ENCODE measurements at regions of chr14 and their contacts with region 1.

Region 1: GRCh38 chr14:93970549-93970946 is 5.8 kb downstream of the ASB2 start:
- DNase-seq: peak; percentile 42
- ATAC-seq: peak; percentile 51
- H3K4me3 Mint-ChIP-seq: peak overlapping the region; percentile 89
- H3K27ac Mint-ChIP-seq: peak overlapping the region; percentile 89
- H3K4me1 Mint-ChIP-seq: peaks cover 70% of the 10 kb centered on the region
- H3K27me3 Mint-ChIP-seq: peaks cover 8% of the 10 kb centered on the region
- CTCF ChIP-seq: no peak

Region 2: DNA sequence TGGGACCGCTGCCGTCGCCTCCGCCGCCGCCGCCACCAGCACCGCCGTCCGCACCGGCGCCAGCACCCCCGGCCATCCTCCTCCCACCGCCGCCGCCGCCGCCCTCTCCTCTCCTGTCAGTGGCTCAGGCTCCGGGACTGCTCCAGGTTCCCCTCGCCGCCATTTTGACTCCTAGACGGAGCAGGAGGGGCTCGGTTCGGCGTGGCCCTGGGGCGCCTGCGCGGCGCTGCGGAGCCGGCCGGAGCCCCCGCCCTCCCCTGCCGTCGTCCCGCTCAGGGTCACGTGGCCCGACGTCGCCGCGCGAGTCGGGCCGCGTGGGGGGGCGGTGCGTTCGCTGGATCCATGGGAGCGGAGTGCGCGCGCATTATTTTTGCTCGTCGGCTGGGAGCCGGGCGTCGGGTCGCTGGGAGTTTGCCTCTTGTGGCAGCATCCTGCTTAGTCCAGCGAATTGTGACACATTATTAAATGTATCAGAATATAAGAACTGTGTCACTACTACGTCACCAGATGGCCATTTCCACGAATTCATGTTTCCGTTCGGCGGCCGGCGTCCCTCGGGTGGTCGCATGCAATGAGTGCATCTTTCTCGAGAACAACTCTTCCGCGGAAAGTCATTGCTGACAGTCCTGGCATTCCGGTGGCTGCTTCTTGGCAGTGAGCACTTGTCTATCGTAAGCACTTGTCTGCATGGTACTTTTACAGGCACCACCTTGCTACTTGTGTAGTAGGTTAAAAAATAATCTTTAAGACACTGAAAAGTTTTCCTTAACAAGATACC is 637.5 kb before region 1 on chr14 and contains the start of gene BTBD7:
- CTCF ChIA-PET with region 1: no interaction called
- POLR2A ChIA-PET with region 1: no interaction called
- intact Hi-C with region 1: loop called (anchors 5 kb)
- DNase-seq: peak; percentile 94
- ATAC-seq: peak; percentile 91
- H3K4me3 Mint-ChIP-seq: peak within 1 kb of the TSS; percentile 95
- H3K27ac Mint-ChIP-seq: peak within 1 kb of the TSS; percentile 90
- H3K4me1 Mint-ChIP-seq: peaks cover 40% of the 10 kb centered on the region
- H3K27me3 Mint-ChIP-seq: no peaks in the 10 kb centered on the region
- CTCF ChIP-seq: no peak
- total RNA-seq, gene BTBD7: 34.4 and 41.2 TPM in 2 replicates

Region 3: GRCh38 chr14:93953263-93953662 is 17.3 kb before region 1 on chr14:
- CTCF ChIA-PET with region 1: interaction called, 34 read pairs
- POLR2A ChIA-PET with region 1: interaction called, 133 read pairs
- intact Hi-C with region 1: loop called (anchors 2 kb)
- DNase-seq: no peak
- ATAC-seq: no peak
- H3K4me3 Mint-ChIP-seq: no peak overlapping the region
- H3K27ac Mint-ChIP-seq: no peak overlapping the region
- H3K4me1 Mint-ChIP-seq: peaks cover 50% of the 10 kb centered on the region
- H3K27me3 Mint-ChIP-seq: no peaks in the 10 kb centered on the region
- CTCF ChIP-seq: no peak

Region 4: DNA sequence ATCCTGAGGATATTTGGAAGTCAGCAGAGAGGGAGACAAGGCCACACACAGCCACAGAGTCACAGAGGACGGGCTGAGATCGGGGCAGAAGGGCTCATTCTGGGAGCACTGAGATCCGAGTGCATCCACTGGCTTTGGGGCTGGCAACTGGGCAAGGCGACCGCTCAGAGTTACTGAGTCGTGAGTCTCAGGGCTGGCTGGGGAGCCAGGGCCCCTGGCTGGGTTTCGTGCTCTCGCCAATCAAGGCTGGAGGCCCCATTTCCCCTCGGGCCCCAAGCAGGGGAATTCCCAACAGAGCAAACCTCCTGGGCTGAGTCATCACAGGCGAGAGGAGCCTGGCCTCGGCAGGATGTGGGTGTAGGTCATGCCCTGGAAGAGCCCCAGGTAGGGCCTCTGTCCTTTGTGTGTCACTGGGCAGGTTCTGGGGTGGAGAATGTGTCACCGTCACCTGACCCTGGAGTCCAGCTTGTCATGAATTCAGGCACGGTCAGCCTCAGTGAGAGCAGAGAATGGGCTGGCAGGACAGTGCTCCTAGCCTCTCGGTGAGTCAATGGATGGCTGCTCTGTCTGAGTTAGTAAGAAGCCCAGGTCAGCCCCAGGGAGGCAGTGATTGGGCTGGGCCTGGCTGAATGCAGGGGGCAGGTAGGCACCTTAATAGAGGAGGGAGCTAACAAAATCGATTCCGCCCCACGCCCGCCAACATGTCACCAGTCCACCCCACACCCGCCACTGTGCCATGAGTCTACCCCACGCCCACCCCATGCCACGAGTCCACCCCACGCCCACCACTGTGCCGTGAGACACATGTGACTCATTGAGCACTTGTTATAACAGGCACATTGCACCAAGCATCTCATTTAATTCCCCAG is 11.1 kb before region 1 on chr14:
- CTCF ChIA-PET with region 1: interaction called, 34 read pairs
- POLR2A ChIA-PET with region 1: interaction called, 133 read pairs
- intact Hi-C with region 1: loop called (anchors 1 kb)
- DNase-seq: peak; percentile 81
- ATAC-seq: peak; percentile 75
- H3K4me3 Mint-ChIP-seq: peak overlapping the region; percentile 80
- H3K27ac Mint-ChIP-seq: peak overlapping the region; percentile 93
- H3K4me1 Mint-ChIP-seq: peaks cover 95% of the 10 kb centered on the region
- H3K27me3 Mint-ChIP-seq: no peaks in the 10 kb centered on the region
- CTCF ChIP-seq: no peak

Region 5: DNA sequence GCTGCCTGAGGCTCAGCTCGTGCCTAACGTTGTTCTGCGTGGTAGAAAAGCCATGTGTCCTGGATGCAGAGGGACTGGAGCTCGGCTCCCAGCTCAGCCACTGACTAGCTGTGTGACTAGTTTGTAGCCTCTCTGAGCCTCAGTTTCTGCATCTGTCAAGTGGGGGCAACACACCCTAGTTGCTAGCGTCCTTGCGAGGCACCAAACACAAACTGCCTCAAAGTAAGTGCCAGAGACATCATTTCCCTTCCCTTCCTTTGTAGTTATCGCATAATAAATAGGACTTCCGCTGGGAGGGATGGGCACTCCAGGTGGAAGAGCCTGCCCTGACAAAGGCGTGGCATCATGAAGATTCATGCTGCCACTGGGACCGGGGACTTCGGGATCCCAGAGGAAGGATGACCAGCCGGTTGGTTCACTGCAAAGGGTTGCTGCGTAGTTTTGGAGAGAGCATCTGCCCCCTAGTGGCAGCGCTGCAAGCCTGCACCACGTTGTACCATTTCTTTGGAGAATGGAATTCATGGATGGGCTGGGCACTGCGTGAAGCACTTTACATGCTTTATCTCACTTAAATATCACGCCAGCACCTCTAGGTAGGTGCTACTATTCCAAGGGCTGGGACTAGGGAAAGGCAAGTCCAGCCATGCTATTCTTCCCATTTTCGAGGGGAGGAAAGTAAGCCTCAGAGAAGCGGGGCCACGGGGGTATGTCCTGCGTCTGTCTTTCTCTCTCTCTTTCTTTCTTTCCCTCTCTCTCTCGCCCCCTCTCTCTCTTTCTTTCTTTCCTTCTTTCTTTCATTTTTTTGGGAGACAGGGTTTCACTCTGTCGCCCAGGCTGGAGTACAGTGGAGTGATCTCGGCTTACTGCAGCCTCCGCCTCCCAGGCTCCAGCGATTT is 31.2 kb after region 1 on chr14:
- CTCF ChIA-PET with region 1: interaction called, 32 read pairs
- POLR2A ChIA-PET with region 1: interaction called, 8 read pairs
- intact Hi-C with region 1: loop called (anchors 1 kb)
- DNase-seq: peak; percentile 52
- ATAC-seq: peak; percentile 89
- H3K4me3 Mint-ChIP-seq: no peak overlapping the region
- H3K27ac Mint-ChIP-seq: no peak overlapping the region
- H3K4me1 Mint-ChIP-seq: no peaks in the 10 kb centered on the region
- H3K27me3 Mint-ChIP-seq: peaks cover 27% of the 10 kb centered on the region
- CTCF ChIP-seq: peak; percentile 88

Region 6: DNA sequence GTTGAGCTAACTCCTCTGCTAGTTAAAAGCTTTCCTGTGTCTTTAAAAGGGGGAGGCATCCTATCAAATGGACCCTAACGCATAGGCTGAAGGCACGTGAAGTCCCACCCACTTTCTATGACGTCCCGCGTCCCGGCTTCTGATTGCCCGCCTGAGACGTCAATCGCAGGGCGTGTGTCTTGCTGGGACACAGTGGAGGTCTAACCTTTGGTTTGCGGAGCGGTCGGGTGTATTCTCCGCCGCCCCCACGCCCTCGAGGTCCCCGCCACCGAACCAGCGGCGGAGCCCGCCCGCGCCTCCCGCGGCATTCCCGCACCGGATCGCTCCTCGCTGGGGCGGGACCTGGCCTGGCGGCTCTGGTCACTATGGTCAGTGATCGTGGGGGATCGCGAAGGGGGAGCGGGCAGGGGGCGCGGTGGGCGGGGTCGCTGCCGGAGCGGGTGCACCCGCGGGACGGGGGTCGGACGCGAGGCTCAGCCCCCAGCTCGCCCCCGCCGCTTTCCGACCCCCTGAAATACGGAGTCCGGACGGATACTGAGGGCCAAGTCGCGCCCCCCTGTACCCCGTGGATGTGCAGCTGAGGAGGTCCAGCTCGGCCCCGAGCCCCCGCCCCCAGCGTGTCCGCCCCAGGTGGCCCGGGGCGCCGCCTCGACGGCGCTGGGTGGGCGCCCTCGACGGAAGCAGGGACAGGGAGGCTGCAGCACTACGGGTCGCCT is 55.8 kb after region 1 on chr14 and contains the start of gene OTUB2:
- CTCF ChIA-PET with region 1: interaction called, 5 read pairs
- POLR2A ChIA-PET with region 1: no interaction called
- intact Hi-C with region 1: loop called (anchors 1 kb)
- DNase-seq: peak; percentile 90
- ATAC-seq: peak; percentile 100
- H3K4me3 Mint-ChIP-seq: peak within 1 kb of the TSS; percentile 78
- H3K27ac Mint-ChIP-seq: no peak within 1 kb of the TSS
- H3K4me1 Mint-ChIP-seq: peaks cover 5% of the 10 kb centered on the region
- H3K27me3 Mint-ChIP-seq: peaks cover 29% of the 10 kb centered on the region
- CTCF ChIP-seq: no peak
- total RNA-seq, gene OTUB2: 0.12 TPM in 1 of 2 replicates, not detected in the other

Measured in activated B cell treated with CpG ODN at 0.5 μM for 24 hours (primary cell).